Transverse colon (tissue), 4 donors: ENCODE measurements at regions of chr1 and their contacts with region 1.

Region 1: DNA sequence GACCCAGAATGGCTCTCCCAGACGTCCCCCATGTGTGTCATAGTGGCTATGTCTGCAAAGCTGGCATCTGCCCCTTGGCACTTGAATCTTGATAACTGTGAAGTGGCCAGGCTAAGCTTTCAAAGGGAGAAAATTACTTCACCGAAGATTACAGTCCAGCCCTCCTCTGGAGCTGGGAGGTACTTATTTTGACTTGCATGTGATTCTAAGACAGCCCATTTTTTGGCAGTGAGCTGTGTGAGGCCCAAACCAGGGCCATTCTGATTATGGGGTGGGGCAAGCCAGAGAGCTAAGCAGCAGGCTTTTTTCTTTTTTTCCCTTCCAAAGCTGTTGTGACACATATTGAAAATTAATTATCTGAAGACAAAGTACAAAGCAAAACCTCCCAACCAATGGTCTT is 42.1 kb upstream of the C8B start:
- DNase-seq: no peak
- H3K4me3 ChIP-seq: no peak overlapping the region
- H3K27ac ChIP-seq: no peak overlapping the region
- H3K4me1 ChIP-seq: no peaks in the 10 kb centered on the region
- H3K27me3 ChIP-seq: no peaks in the 10 kb centered on the region
- CTCF ChIP-seq: no peak
- EP300 ChIP-seq: no peak
- POLR2A ChIP-seq: no peak

Region 2: GRCh38 chr1:57026624-57027354 is 18.8 kb after region 1 on chr1:
- in situ Hi-C with region 1: no loop called
- intact Hi-C with region 1: loop called (anchors 1 kb)
- DNase-seq: no peak
- H3K4me3 ChIP-seq: no peak overlapping the region
- H3K27ac ChIP-seq: no peak overlapping the region
- H3K4me1 ChIP-seq: no peaks in the 10 kb centered on the region
- H3K27me3 ChIP-seq: no peaks in the 10 kb centered on the region
- CTCF ChIP-seq: no peak
- EP300 ChIP-seq: no peak
- POLR2A ChIP-seq: no peak